HCT116 (cell line): ENCODE measurements at regions of chr12 and their contacts with region 1.

Region 1: GRCh38 chr12:54439521-54440255 is 20.6 kb upstream of the ITGA5 start:
- DNase-seq: peak; percentile 38
- ATAC-seq: peak; percentile 92
- H3K4me3 ChIP-seq: no peak overlapping the region
- H3K27ac ChIP-seq: no peak overlapping the region
- H3K4me1 ChIP-seq: no peaks in the 10 kb centered on the region
- H3K27me3 ChIP-seq: no peaks in the 10 kb centered on the region
- CTCF ChIP-seq: peak; percentile 67 to 92 (median 81)
- POLR2A ChIP-seq: no peak
- RAD21 ChIP-seq: peak; percentile 93

Region 2: DNA sequence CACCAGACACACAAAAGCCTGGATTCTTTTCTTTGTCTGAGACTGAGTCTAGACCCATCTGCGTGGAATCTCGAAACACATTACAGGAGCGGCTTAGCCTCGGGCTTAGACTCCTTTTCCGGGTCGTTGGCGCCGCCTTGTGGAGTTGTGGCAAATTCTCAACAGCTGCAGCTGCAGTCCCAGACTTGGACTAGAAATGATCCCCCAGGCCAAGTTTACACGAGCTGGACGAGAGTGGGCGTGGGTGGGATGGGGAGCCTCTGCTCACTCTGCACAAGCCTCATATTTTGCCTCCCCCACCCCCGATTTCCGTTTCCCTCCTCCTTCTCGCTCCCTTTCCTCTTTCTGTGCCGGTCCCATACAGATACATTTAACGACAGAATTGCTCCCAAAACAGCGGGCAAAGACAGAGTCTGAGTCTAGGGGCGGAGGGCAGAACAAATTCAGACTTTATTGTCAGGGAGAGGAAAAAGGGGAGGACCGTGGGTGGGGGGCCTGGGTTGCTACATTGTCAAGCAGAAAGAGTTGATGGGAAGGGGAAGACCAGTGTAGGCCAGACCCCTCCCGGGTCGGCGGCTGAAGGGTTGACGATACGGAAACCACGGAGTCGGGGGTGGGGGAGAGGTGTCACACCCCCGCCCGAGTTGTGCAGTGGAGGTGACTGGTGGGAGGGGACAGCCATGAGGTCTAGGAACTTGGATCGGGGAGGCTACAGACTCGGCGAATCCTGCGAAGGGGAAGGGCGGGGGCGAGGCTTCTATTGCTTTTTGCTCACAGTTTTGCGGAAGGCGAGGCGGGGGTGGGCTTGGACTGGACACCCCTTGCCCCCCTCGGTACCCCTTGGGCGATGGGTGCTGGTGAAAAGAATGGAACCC is 70.7 kb before region 1 on chr12:
- CTCF ChIA-PET with region 1: interaction called, 12 read pairs
- POLR2A ChIA-PET with region 1: no interaction called
- RAD21 ChIA-PET with region 1: no interaction called
- intact Hi-C with region 1: loop called (anchors 2 kb)
- DNase-seq: peak; percentile 67
- ATAC-seq: peak; percentile 72
- H3K4me3 ChIP-seq: no peak overlapping the region
- H3K27ac ChIP-seq: no peak overlapping the region
- H3K4me1 ChIP-seq: peaks cover 30 to 58% of the 10 kb centered on the region in 2 experiments
- H3K27me3 ChIP-seq: no peaks in the 10 kb centered on the region
- CTCF ChIP-seq: peak; percentile 87 to 96 (median 90)
- POLR2A ChIP-seq: no peak
- RAD21 ChIP-seq: peak; percentile 90

Region 3: GRCh38 chr12:54452628-54453027 is 12.9 kb after region 1 on chr12:
- CTCF ChIA-PET with region 1: interaction called, 11 read pairs
- POLR2A ChIA-PET with region 1: interaction called, 5 read pairs
- RAD21 ChIA-PET with region 1: no interaction called
- intact Hi-C with region 1: no loop called
- DNase-seq: no peak
- ATAC-seq: no peak
- H3K4me3 ChIP-seq: no peak overlapping the region
- H3K27ac ChIP-seq: no peak overlapping the region
- H3K4me1 ChIP-seq: no peaks in the 10 kb centered on the region
- H3K27me3 ChIP-seq: no peaks in the 10 kb centered on the region
- CTCF ChIP-seq: no peak
- POLR2A ChIP-seq: no peak
- RAD21 ChIP-seq: no peak

Region 4: DNA sequence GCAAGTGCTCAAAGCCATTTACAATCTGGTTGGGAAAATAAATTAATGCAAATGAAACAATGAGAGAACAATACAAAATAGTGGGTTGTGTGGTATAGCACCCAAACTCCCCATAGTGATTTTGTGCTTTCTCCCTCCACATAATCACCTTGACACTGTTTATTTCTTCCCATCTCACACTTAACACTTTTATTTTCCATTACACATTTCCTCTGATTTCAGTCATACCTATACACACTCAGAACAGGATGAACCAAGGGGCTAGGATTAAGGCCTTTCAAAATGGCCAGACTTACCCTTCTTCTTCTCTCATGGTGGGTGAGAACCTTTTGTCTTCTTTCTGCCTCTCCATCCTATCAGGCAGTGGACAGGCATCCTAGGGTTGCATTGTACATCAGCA is 95.8 kb after region 1 on chr12:
- CTCF ChIA-PET with region 1: no interaction called
- POLR2A ChIA-PET with region 1: no interaction called
- RAD21 ChIA-PET with region 1: no interaction called
- intact Hi-C with region 1: no loop called
- DNase-seq: no peak
- ATAC-seq: no peak
- H3K4me3 ChIP-seq: no peak overlapping the region
- H3K27ac ChIP-seq: no peak overlapping the region
- H3K4me1 ChIP-seq: no peaks in the 10 kb centered on the region
- H3K27me3 ChIP-seq: peaks cover 39% of the 10 kb centered on the region
- CTCF ChIP-seq: no peak
- POLR2A ChIP-seq: no peak
- RAD21 ChIP-seq: no peak